Activated naive CD4-positive, alpha-beta T cell treated with anti-CD3 and anti-CD28 coated beads for 36 hours (primary cell): ENCODE measurements at regions of chr3 and their contacts with region 1.

Region 1: DNA sequence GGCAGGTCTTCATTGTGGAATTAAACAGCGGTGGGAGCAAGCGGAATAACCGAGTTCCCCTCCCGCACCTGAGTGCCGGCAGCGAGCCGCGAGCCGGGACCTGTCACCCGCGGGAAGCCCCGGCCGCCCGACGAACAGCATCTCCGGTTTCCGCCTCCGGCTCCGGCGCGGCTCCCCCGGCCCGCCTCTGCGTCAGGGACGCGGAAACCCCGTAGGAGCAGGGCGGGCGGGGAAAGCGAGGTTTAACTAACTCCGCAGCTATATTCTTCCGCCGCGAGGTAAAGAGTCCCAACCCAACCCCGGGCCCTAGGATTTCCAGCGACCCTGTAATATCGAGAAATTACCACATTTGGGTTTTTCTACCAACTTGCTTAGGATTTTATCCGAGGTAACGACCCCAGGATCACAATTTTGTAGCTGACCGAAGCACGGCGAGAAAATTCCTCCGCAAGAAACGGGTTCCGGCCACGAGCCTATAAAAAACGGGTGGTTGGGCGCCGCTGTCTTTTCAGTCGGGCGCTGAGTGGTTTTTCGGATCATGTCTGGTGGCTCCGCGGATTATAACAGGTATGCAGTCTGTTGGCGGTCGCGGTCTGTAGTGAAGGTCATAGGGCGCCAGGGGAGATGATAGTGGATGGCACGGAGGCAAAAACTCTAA is at the start of gene EIF4A2:
- DNase-seq: peak; percentile 91
- H3K4me3 Mint-ChIP-seq: peak within 1 kb of the TSS; percentile 99
- H3K27ac Mint-ChIP-seq: peak within 1 kb of the TSS; percentile 100
- H3K4me1 Mint-ChIP-seq: peaks cover 29% of the 10 kb centered on the region
- H3K27me3 Mint-ChIP-seq: peaks cover 3% of the 10 kb centered on the region
- total RNA-seq, gene EIF4A2: 445 to 469 TPM

Region 2: GRCh38 chr3:185937689-185938463 is 845.3 kb before region 1 on chr3 and contains the start of gene TRA2B:
- CTCF ChIA-PET with region 1: no interaction called
- intact Hi-C with region 1: loop called (anchors 1 kb)
- DNase-seq: peak; percentile 99
- H3K4me3 Mint-ChIP-seq: peak within 1 kb of the TSS; percentile 100
- H3K27ac Mint-ChIP-seq: peak within 1 kb of the TSS; percentile 100
- H3K4me1 Mint-ChIP-seq: peaks cover 20% of the 10 kb centered on the region
- H3K27me3 Mint-ChIP-seq: no peaks in the 10 kb centered on the region
- total RNA-seq, gene TRA2B: 172 to 176 TPM

Region 3: DNA sequence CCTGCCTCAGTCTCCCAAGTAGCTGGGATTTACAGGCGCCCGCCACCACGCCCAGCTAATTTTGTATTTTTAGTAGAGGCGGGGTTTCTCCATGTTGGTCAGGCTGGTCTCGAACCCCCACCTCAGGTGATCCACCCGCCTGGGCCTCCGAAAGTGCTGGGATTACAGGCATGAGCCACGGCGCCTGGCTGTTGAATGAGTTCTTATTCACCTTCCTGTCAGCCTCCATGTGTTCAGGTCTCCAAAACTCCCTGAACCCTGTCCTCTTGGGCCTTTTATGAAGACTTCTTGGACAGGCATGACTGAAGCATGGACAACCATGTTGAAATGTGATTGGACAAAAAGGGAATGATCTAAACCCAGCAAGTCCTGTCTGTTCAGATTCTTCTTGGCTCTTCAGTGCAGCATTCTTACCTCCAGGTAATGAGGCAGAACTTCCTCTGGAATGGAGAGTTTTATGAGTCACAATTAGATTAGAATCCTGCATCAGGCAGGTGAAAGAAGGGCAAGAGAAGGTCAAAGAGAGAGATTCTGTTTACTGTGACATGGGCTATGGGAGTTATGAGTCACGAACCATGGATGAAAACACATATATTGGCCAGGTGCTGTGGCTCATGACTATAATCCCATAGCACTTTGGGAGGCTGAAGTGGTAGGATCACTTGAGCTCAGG is 22.9 kb before region 1 on chr3:
- CTCF ChIA-PET with region 1: no interaction called
- intact Hi-C with region 1: no loop called
- DNase-seq: no peak
- H3K4me3 Mint-ChIP-seq: no peak overlapping the region
- H3K27ac Mint-ChIP-seq: no peak overlapping the region
- H3K4me1 Mint-ChIP-seq: peaks cover 6% of the 10 kb centered on the region
- H3K27me3 Mint-ChIP-seq: no peaks in the 10 kb centered on the region

Region 4: DNA sequence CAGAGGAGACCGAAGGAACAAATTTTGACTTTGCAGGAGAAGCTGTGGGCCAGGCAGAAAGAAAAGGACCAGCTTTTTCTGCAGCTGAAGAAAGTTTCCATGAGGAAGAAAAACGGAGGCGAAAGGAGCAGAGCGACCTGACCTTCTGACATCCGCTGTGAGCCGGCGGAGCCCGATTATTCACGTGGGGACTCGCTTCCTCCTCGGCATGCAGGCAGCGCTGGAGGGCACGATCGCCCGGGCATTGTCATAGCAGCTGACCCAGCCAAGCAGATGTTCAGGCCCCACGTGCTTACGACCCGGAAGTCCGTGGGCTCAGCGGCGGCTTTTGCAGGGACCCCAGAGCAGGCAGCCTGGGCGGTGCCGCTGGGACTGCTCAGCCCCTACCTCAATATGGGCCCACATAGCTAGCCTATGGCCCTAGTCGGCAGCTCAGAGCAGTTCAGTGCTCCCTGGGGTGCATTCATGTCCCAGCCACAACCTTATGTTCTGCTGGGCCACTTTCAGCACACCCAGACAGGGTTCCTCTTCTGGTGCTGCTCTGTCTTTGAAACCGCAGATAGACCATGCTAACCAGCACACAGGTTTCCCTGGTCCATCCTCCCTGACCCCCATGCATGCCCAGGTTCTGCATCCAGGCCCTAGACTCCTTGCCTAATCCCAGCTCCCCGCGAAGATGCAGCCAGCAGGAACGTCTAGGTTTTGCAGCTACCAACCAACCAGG is 10.3 kb before region 1 on chr3:
- CTCF ChIA-PET with region 1: interaction called, 5 read pairs
- intact Hi-C with region 1: loop called (anchors 1 kb)
- DNase-seq: peak; percentile 83
- H3K4me3 Mint-ChIP-seq: peak overlapping the region; percentile 95
- H3K27ac Mint-ChIP-seq: peak overlapping the region; percentile 95
- H3K4me1 Mint-ChIP-seq: peaks cover 10% of the 10 kb centered on the region
- H3K27me3 Mint-ChIP-seq: no peaks in the 10 kb centered on the region

Region 5: DNA sequence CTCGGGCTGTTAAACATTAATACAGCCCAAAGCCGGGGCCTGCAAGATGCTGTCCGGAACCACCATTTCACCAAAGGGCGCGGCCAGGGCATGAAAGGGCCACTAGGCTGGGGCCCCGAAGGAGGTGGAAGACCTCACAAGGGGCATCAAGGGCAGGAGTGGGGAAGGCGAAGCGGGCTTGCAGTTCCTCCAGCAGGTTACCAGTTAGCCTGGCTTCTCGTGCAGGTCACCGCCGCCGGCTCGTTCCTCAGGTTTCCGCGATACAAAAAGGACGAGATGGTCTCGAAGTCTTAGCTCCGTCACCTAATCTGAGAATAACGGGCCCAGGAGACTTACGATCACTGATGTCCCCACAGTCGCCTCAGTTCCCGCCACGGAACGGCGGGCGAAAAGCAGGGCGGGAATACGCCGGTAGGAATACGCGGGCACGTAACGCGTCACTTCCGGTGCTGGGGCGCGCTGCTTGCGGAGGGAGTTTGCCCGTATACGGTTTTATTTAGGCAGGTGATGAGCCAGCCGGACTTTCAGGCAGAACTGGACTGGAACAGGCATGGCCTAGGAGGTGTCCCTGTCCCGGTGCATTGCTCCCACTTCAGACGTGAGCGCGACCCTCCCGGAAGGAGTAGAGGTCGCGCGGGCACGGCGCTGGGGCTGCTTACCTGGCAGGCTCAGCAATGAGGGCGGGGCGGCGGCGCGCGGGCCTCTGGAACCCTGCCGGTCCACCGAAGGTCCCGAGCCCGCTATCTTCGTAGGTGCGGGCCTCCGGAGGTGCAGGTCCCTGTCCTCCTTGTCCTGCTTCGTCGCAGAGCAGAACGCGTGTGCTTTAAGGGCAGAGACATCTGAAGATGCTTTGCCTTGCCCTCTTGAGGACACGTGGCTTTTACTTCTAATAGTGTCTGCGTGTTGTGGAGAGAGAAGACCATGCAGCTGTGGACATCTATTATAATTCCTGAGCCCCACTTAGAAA is 23.2 kb after region 1 on chr3 and contains the start of gene RFC4:
- CTCF ChIA-PET with region 1: no interaction called
- intact Hi-C with region 1: loop called (anchors 1 kb)
- DNase-seq: peak; percentile 92
- H3K4me3 Mint-ChIP-seq: peak within 1 kb of the TSS; percentile 91
- H3K27ac Mint-ChIP-seq: peak within 1 kb of the TSS; percentile 94
- H3K4me1 Mint-ChIP-seq: peaks cover 19% of the 10 kb centered on the region
- H3K27me3 Mint-ChIP-seq: no peaks in the 10 kb centered on the region
- total RNA-seq, gene RFC4: 135 to 136 TPM

Region 6: GRCh38 chr3:186826976-186827731 is 44.0 kb after region 1 on chr3:
- CTCF ChIA-PET with region 1: no interaction called
- intact Hi-C with region 1: loop called (anchors 1 kb)
- DNase-seq: peak; percentile 82
- H3K4me3 Mint-ChIP-seq: peak overlapping the region; percentile 78
- H3K27ac Mint-ChIP-seq: peak overlapping the region; percentile 69
- H3K4me1 Mint-ChIP-seq: peaks cover 30% of the 10 kb centered on the region
- H3K27me3 Mint-ChIP-seq: peaks cover 38% of the 10 kb centered on the region